ENCODE measurements at regions of chr9 and their contacts with region 1.

Region 1: GRCh38 chr9:28899926-28900325 is 1326.6 kb upstream of the C9orf72 start:
- DNase-seq: no peak
- ATAC-seq: no peak
- H3K4me3 ChIP-seq: no peak overlapping the region
- H3K4me3 Mint-ChIP-seq: no peak overlapping the region
- H3K27ac ChIP-seq: no peak overlapping the region
- H3K27ac Mint-ChIP-seq: no peak overlapping the region
- H3K4me1 ChIP-seq: no peaks in the 10 kb centered on the region
- H3K4me1 Mint-ChIP-seq: peaks cover 0 to 19% of the 10 kb centered on the region in 2 donors
- H3K27me3 ChIP-seq: no peaks in the 10 kb centered on the region
- H3K27me3 Mint-ChIP-seq: no peaks in the 10 kb centered on the region
- CTCF ChIP-seq: no peak

Region 2: GRCh38 chr9:28866951-28867350 is 33.0 kb before region 1 on chr9:
- intact Hi-C with region 1: loop called (anchors 1 kb)
- DNase-seq: no peak
- ATAC-seq: no peak
- H3K4me3 ChIP-seq: no peak overlapping the region
- H3K4me3 Mint-ChIP-seq: no peak overlapping the region
- H3K27ac ChIP-seq: no peak overlapping the region
- H3K27ac Mint-ChIP-seq: peak overlapping the region in 1 of 2 donors; percentile 41
- H3K4me1 ChIP-seq: no peaks in the 10 kb centered on the region
- H3K4me1 Mint-ChIP-seq: peaks cover 6 to 35% of the 10 kb centered on the region in 2 donors
- H3K27me3 ChIP-seq: no peaks in the 10 kb centered on the region
- H3K27me3 Mint-ChIP-seq: no peaks in the 10 kb centered on the region
- CTCF ChIP-seq: no peak

Region 3: DNA sequence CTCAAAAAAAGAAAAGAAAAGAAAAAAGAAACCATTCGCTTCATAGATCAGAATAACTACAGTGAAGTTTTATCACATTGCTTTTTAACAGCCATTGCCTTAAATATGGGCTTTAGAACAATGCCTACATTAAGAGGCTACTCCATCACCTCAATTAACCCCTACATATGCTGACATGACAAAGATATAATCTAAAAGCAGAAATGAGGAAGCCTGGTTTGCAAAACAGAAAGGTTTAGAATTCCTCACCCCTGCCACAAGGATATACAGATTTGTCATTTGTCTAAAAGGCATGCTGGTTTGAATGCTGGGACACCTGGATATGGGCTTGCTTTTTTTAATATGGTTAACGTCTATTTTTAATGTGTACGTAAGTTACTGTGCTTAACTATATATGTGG is 26.4 kb after region 1 on chr9:
- intact Hi-C with region 1: loop called (anchors 1 kb)
- DNase-seq: no peak
- ATAC-seq: no peak
- H3K4me3 ChIP-seq: no peak overlapping the region
- H3K4me3 Mint-ChIP-seq: no peak overlapping the region
- H3K27ac ChIP-seq: no peak overlapping the region
- H3K27ac Mint-ChIP-seq: no peak overlapping the region
- H3K4me1 ChIP-seq: no peaks in the 10 kb centered on the region
- H3K4me1 Mint-ChIP-seq: peaks cover 0 to 26% of the 10 kb centered on the region in 2 donors
- H3K27me3 ChIP-seq: no peaks in the 10 kb centered on the region
- H3K27me3 Mint-ChIP-seq: no peaks in the 10 kb centered on the region
- CTCF ChIP-seq: no peak